Dorsolateral prefrontal cortex (tissue), 120 donors: ENCODE measurements at regions of chr1 and their contacts with region 1.

Region 1: DNA sequence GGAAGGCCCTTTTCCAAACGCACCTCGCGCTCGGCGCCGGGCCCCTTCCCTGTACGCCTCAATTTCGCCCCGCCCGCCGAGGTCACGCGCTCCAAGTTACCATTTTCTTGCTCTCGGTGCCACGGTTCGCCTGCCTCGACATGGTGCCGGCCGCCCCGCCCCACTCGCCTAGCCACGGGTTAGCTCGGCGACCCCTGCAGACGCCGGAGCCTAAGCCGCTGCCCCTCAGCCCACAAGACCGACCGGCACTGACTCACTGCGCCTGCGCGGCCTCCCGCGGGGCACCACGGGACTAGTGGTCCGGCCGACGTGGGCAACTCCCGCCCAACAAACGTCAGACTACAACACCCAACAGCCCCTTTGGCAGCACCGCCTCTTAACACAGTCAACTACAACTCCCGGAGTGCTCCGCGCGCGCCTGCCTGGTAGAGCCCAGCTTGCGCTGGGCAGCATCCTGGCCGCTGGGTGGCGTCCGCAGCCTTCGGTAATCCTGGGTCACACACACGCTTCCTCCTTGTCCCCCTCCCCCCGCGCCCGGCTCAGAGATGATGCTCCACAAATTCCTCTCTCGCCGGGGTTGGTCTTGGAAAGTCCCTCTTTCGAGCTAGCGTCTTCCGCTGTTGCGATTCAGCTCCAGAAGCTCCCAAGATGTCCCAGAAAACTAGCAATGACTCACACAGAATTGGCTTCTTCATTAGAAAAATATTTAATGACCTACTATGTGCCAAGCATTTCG is at the start of gene TRAPPC3:
- DNase-seq: peak; percentile 100
- H3K4me3 ChIP-seq: peak within 1 kb of the TSS; percentile 65 to 99 (median 93)
- H3K27ac ChIP-seq: peak within 1 kb of the TSS; percentile 60 to 100 (median 92)
- H3K27me3 ChIP-seq: no peaks in the 10 kb centered on the region
- CTCF ChIP-seq: peak in 55 of 56 donors; percentile 91 to 100 (median 98)
- total RNA-seq, gene TRAPPC3: 41.0 to 81.9 (median 61.8) TPM

Region 2: GRCh38 chr1:36187800-36188593 is 38.6 kb after region 1 on chr1:
- intact Hi-C with region 1: loop called (anchors 1 kb)
- DNase-seq: peak; percentile 71 to 93 (median 90)
- H3K4me3 ChIP-seq: peak overlapping the region in 9 of 59 donors; percentile 2 to 24 (median 9)
- H3K27ac ChIP-seq: peak overlapping the region; percentile 72 to 96 (median 91)
- H3K27me3 ChIP-seq: no peaks in the 10 kb centered on the region
- CTCF ChIP-seq: peak; percentile 69 to 96 (median 91)

Region 3: DNA sequence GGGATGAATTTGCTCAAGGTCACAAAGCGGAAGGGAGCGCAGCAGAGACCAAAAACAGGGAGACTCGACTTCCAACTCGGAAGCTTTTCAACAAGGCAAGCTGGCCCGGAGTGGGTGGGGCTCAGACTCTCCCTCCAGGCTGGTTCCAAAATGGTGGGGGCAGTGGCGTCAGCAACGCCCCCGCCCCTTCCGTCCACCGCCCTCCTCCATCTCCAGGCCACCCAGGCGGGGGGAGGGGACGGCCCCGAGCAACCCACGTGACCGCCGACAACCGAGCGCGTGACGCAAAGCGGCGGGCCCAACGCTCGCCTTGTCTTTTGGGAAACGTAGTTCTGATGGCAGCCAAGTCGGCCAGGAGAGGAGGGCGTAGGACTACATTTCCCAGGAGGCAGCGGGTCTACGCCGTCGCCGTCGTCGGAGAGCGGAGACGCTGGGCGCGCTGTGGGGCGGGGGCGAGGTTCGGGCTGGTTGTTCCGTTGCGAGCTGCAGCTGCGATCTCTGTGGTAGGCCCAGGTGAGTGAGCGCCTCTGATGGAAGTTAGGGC is 74.7 kb after region 1 on chr1 and contains the start of gene THRAP3:
- intact Hi-C with region 1: loop called (anchors 1 kb)
- DNase-seq: peak; percentile 99 to 100 (median 100)
- H3K4me3 ChIP-seq: peak within 1 kb of the TSS; percentile 58 to 99 (median 90)
- H3K27ac ChIP-seq: peak within 1 kb of the TSS; percentile 76 to 99 (median 96)
- H3K27me3 ChIP-seq: no peaks in the 10 kb centered on the region
- CTCF ChIP-seq: peak in 16 of 56 donors; percentile 0 to 53 (median 23)
- total RNA-seq, gene THRAP3: 55.1 to 96.7 (median 78.0) TPM

Region 4: DNA sequence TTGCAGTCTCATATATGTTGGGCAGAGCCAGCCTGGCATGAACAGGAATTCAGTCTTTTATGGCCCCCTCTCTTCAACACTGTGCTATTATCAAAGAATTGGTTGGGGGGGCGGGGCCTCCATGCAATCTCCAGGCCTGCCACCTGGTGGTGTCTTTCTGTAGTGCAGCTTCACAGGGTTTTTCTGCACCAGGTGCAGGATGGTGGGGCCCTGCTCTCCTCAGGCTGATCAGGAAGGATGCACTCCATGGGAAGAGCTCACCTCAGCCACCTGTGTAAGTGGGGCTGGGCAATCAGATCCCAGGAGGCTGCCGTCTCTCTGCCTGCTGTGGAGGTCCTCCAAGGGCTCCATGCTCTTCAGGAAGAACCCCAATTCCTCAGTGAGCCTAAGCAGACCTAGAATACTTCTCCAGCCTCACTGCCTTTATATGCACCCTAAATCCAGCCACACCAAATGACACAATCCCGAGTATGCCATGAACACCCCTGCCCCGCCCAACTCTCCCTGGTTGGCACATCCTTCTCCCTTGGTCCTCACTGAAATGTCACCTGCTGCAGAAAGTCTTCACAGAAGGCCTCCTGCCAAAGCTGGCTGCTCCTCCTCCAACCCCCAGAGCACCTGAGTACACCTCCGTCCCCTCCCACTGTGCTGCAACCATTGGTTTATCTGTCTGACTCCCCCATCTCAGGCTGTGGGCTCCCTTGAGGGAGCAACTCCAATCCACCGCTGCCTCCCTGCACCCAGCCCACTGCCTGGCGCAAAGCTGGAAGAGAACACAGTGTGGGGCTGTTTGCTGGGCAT is 219.9 kb after region 1 on chr1:
- intact Hi-C with region 1: loop called in 1 of 2 experiments (anchors 5 kb)
- DNase-seq: peak; percentile 58 to 86 (median 75)
- H3K4me3 ChIP-seq: no peak overlapping the region
- H3K27ac ChIP-seq: peak overlapping the region in 42 of 59 donors; percentile 2 to 69 (median 41)
- H3K27me3 ChIP-seq: no peaks in the 10 kb centered on the region
- CTCF ChIP-seq: peak; percentile 84 to 99 (median 96)

Region 5: DNA sequence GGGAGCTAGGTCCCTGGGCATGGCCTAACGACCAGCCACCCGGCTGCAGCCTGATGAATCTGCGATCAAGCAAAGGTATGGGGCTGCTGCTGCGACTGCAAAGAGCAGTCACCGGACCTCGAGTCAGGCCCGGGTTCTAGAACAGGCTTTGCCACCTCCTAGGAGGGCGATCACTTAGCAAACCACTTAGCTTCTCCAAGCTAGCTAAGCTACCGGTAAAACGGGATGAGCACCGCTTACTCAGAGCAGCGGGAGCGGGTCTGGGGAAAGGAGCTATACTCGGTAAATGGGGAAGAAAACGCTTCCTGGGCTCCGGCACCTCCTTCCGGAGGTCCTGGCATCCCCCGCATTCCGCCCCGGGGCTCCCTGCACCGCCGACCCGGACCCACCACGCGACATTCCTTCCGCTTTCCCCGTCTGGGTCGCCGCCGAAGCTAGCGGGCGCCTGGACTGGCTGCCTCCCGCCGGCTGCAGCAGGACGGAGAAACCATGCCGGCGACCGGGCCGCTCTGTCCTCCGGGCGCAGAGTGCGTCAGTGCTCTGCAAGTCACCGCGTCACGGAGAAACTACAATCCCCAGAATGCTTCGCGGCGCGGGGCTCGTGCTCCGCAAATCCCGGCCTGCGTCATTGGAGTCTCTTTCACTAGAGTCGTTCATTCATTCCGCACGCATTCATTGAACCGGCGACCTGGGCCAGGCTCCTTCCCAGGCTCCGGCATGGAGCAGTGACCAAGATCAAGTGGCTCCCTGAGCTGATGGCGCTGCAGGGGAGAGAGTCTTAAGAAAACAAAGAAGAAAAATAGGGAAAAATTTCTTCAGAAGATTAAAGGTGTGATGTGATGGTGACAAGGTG is 248.2 kb after region 1 on chr1 and contains the start of gene LSM10:
- intact Hi-C with region 1: loop called in 1 of 2 experiments (anchors 10 kb)
- DNase-seq: peak; percentile 91 to 97 (median 96)
- H3K4me3 ChIP-seq: peak within 1 kb of the TSS; percentile 62 to 100 (median 91)
- H3K27ac ChIP-seq: peak within 1 kb of the TSS; percentile 63 to 98 (median 92)
- H3K27me3 ChIP-seq: no peaks in the 10 kb centered on the region
- CTCF ChIP-seq: peak in 36 of 56 donors; percentile 6 to 59 (median 32)
- total RNA-seq, gene LSM10: 20.2 to 48.4 (median 34.9) TPM